ENCODE measurements at regions of chr1 and their contacts with region 1.

Region 1: DNA sequence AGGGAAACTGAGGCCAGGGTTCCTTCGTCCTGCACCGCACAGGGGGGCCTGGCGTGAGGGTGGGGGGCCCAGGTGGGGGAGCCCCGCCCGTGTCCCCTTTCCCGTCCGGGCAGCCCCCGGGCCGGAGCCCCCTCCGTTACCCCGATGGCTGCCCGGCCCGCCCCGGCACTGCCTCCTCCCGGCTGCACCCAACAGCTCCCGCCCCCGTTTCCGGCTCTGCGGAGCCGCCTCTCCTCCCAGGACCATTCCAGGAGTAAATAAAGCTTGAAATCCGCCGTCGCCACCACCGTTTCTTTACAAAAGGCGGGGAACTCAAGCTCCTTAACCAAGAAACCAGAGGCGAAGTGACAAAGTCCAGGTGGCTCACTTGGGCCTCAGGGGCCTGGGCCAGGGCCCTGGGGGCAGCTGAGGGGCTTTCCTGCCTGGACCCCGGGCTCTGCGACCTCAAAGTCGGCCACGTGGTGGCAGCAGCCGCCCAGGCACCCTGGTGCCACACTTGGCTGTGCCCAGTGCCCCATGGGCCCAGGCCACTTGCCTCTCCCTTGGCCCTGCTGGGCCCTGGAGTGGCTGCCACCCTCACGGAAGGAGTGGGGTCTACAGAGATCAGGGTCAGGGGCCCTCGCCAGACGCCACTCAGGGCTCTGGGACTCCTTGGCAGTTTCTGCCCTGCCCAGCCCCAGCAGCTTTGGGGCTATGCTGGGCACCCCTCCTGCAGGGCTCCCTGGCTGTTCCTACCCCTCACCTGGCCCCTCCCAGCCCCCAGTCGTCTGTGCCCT is 514 bp upstream of the FAAP20 start:
- DNase-seq: peak; percentile 96
- H3K4me3 ChIP-seq: peak overlapping the region; percentile 68 to 73
- H3K27ac ChIP-seq: peak overlapping the region; percentile 85 to 94
- H3K4me1 ChIP-seq: peaks cover 0 to 41% of the 10 kb centered on the region in 2 experiments; a peak in 1 of 4 replicates
- H3K27me3 ChIP-seq: no peaks in the 10 kb centered on the region
- CTCF ChIP-seq: peak; percentile 87
- EP300 ChIP-seq: no peak
- RAD21 ChIP-seq: peak; percentile 94

Region 2: GRCh38 chr1:2166254-2167024 is 28.6 kb before region 1 on chr1:
- CTCF ChIA-PET with region 1: no interaction called
- POLR2A ChIA-PET with region 1: no interaction called
- DNase-seq: peak; percentile 68
- H3K4me3 ChIP-seq: no peak overlapping the region
- H3K27ac ChIP-seq: no peak overlapping the region
- H3K4me1 ChIP-seq: no peaks in the 10 kb centered on the region; a peak in 1 of 4 replicates
- H3K27me3 ChIP-seq: no peaks in the 10 kb centered on the region
- CTCF ChIP-seq: no peak
- EP300 ChIP-seq: no peak
- RAD21 ChIP-seq: no peak

Region 3: GRCh38 chr1:2212542-2213491 is 17.7 kb after region 1 on chr1:
- CTCF ChIA-PET with region 1: interaction called, 10 read pairs
- POLR2A ChIA-PET with region 1: interaction called, 3 read pairs
- DNase-seq: peak; percentile 86
- H3K4me3 ChIP-seq: no peak overlapping the region; a peak in 1 of 4 replicates
- H3K27ac ChIP-seq: peak overlapping the region; percentile 58 to 84; a peak in 3 of 4 replicates
- H3K4me1 ChIP-seq: peaks cover 19 to 41% of the 10 kb centered on the region in 2 experiments; a peak in 2 of 4 replicates
- H3K27me3 ChIP-seq: no peaks in the 10 kb centered on the region
- CTCF ChIP-seq: no peak; the same call in 1 of the 2 replicates
- EP300 ChIP-seq: no peak
- RAD21 ChIP-seq: no peak

Region 4: GRCh38 chr1:2233997-2234761 is 39.1 kb after region 1 on chr1:
- CTCF ChIA-PET with region 1: interaction called, 18 read pairs
- POLR2A ChIA-PET with region 1: interaction called, 5 read pairs
- DNase-seq: no peak
- H3K4me3 ChIP-seq: no peak overlapping the region
- H3K27ac ChIP-seq: no peak overlapping the region; a peak in 1 of 4 replicates
- H3K4me1 ChIP-seq: peaks cover 0 to 79% of the 10 kb centered on the region in 2 experiments; a peak in 2 of 4 replicates
- H3K27me3 ChIP-seq: no peaks in the 10 kb centered on the region
- CTCF ChIP-seq: no peak
- EP300 ChIP-seq: no peak
- RAD21 ChIP-seq: no peak

Region 5: DNA sequence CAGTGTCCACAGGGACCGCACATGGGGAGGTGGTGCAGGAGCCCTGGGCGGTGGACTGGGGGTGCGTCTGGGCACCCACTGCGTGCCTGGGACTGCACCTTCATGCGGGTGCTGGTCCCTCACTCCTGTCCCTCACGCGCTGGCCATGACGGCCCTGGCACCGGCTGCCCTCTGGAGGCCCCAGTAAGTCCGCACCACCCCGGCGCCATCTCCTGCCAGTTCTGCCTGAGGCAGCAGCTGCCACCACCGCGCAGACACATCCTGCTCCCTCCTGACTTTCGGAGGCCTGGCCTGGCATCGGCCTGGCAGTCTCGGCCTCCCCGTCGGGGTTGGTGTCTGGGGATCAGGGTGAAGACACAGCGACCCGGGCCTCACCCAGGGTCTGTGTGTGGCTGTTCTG is 131.4 kb after region 1 on chr1:
- CTCF ChIA-PET with region 1: interaction called, 11 read pairs
- POLR2A ChIA-PET with region 1: no interaction called
- DNase-seq: peak; percentile 90
- H3K4me3 ChIP-seq: no peak overlapping the region
- H3K27ac ChIP-seq: peak overlapping the region in 1 of 2 experiments; percentile 86; a peak in 2 of 4 replicates
- H3K4me1 ChIP-seq: peaks cover 0 to 39% of the 10 kb centered on the region in 2 experiments; a peak in 1 of 4 replicates
- H3K27me3 ChIP-seq: no peaks in the 10 kb centered on the region
- CTCF ChIP-seq: no peak
- EP300 ChIP-seq: no peak
- RAD21 ChIP-seq: peak; percentile 55

Region 6: DNA sequence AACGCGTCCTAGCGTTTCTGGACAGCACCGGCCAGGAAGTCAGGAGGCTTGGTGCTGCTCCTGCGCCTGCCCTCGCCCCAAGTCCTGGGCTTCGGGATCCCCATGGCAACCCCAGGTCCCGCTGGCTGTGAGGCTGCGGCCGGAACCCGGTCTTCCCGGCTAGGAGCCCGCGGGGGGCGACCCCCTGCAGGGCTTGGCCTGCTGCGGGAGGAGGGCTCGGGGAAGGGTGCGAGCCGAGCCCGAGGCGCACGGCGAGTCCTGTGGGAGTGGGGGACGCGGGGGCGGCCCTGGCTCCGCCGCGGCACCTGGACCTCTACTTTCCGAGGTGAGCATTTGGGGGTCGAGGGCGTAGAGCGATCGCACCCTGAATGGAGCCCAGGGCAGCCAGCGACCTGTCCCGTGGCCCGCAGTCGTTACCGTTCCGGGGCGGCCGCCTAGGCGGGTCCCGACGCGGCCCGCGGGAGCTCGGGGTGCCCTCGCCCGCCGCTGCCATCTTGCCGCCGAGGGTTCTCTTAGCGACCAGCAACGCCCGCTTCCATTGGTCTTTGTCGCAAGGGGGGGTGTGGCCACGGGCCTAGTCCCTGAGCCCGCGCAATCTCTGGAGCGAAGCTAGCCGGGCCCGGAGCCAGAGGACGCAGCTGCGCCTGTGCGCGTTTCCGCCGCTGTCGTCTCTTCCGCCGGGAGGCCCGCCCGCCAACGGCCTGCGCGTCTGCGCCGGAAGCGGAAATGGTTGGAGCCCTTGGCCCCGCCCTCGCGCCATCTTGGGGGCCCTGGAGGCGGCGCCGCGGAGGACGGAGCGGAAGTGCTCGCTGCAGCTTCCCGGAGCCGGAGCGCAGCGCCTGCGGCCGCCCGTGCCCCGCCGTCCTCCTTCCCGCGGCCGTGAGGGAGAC is 196.2 kb after region 1 on chr1 and contains the starts of genes MORN1 and RER1:
- CTCF ChIA-PET with region 1: interaction called, 64 read pairs
- POLR2A ChIA-PET with region 1: interaction called, 6 read pairs
- DNase-seq: peak; percentile 99
- H3K4me3 ChIP-seq: peak within 1 kb of the TSS; percentile 88 to 97
- H3K27ac ChIP-seq: peak within 1 kb of the TSS; percentile 56 to 76; a peak in 3 of 4 replicates
- H3K4me1 ChIP-seq: peaks cover 0 to 24% of the 10 kb centered on the region in 2 experiments; a peak in 2 of 4 replicates
- H3K27me3 ChIP-seq: no peaks in the 10 kb centered on the region
- CTCF ChIP-seq: no peak
- EP300 ChIP-seq: no peak; a peak in 1 of 4 replicates
- RAD21 ChIP-seq: no peak
- polyA plus RNA-seq, gene MORN1: 13.7 and 16.3 TPM in 2 replicates
- polyA plus RNA-seq, gene RER1: 181 and 189 TPM in 2 replicates